ENCODE measurements at regions of chr5 and their contacts with region 1.

Region 1: DNA sequence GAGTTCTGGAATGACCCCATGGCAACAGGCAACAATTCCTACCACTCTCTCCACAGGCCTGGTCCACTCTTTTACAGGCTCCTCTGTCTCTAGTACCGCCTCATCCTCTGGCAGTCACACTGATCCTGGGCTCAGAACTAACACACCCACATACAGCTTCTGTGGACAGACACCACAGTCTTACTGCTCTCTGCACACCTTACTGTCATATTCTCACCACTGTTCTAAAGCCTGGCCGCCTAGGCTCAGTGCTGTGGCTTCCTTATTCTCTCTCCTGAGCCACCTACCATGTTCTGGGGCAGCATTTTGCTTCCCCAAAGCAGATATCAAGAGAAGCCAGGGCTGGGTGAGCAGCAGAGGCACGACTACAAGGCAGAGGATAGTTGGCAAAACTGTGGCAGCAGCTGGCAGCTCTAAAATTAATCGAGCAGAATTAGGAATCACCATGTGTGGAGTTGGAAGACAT is 14.8 kb downstream of the REEP5 start:
- DNase-seq: no peak
- H3K4me3 ChIP-seq: no peak overlapping the region
- H3K27ac ChIP-seq: no peak overlapping the region
- H3K4me1 ChIP-seq: no peaks in the 10 kb centered on the region
- H3K27me3 ChIP-seq: no peaks in the 10 kb centered on the region
- CTCF ChIP-seq: no peak
- EP300 ChIP-seq: no peak
- POLR2A ChIP-seq: no peak
- RAD21 ChIP-seq: no peak

Region 2: DNA sequence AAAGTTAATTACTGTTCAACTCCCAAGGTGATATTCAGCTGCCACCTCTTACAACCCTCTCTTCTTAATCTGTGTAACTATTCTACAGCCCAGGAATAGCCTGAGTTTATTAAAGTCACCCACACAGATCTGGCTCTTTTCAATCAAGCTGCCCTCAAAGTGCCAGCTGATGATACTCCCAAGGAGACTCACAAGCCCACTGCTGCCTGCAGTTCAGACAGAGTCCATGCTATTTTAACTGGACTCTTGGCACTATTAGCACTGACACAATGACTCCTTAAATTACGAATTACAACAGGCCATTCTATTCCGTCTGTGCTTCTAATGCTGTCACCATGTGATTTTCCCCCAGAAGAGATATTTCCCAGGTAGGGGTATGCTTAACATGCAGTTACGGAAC is 11.5 kb before region 1 on chr5:
- CTCF ChIA-PET with region 1: interaction called, 14 read pairs
- POLR2A ChIA-PET with region 1: interaction called, 5 read pairs
- DNase-seq: no peak
- H3K4me3 ChIP-seq: no peak overlapping the region
- H3K27ac ChIP-seq: no peak overlapping the region
- H3K4me1 ChIP-seq: no peaks in the 10 kb centered on the region
- H3K27me3 ChIP-seq: no peaks in the 10 kb centered on the region
- CTCF ChIP-seq: no peak
- EP300 ChIP-seq: no peak
- POLR2A ChIP-seq: no peak
- RAD21 ChIP-seq: no peak

Region 3: GRCh38 chr5:112921833-112922817 is 14.9 kb after region 1 on chr5 and contains the start of gene REEP5:
- CTCF ChIA-PET with region 1: interaction called, 17 read pairs
- POLR2A ChIA-PET with region 1: interaction called, 5 read pairs
- DNase-seq: peak in 1 of 2 experiments; percentile 87
- H3K4me3 ChIP-seq: peak within 1 kb of the TSS; percentile 73 to 94 (median 89)
- H3K27ac ChIP-seq: peak within 1 kb of the TSS; percentile 43; the same call in 1 of the 2 replicates
- H3K4me1 ChIP-seq: no peaks in the 10 kb centered on the region
- H3K27me3 ChIP-seq: peaks cover 0 to 2% (median 0%) of the 10 kb centered on the region in 4 experiments; a peak in 2 of 7 replicates
- CTCF ChIP-seq: peak; percentile 80 to 90 (median 87)
- EP300 ChIP-seq: peak in 1 of 2 experiments; percentile 67; a peak in 1 of 3 replicates
- POLR2A ChIP-seq: peak; percentile 20 to 84
- RAD21 ChIP-seq: peak; percentile 51 to 75
- total RNA-seq, gene REEP5: 56.6 and 58.3 TPM in 2 replicates

Measured in H1 (cell line).